ENCODE measurements at regions of chrX and their contacts with region 1.

Region 1: GRCh38 chrX:136931661-136932060 is 51.1 kb upstream of the RBMX start:
- DNase-seq: no peak
- ATAC-seq: no peak
- H3K4me3 Mint-ChIP-seq: no peak overlapping the region
- H3K27ac Mint-ChIP-seq: no peak overlapping the region
- H3K4me1 Mint-ChIP-seq: peaks cover 21% of the 10 kb centered on the region
- H3K27me3 Mint-ChIP-seq: no peaks in the 10 kb centered on the region

Region 2: DNA sequence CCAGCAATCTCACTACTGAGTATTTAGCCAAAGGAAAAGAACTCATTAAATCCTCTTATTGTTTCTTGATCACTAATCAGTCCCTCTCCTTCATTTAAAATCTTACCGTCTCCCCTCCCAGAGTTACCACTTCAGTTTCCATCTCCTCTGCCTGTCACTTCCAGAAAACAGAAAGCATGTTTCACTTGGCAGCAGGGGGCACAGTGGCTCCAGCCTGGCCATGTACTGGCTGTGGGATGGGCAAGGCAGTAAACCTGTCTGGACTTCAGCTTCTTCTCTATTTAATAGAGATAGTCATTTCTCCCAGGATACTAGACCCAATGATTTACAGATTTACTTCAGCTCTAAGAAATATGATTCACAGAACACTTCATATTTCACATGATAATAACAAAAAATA is 220.5 kb before region 1 on chrX:
- CTCF ChIA-PET with region 1: interaction called, 10 read pairs
- DNase-seq: no peak
- ATAC-seq: peak; percentile 60
- H3K4me3 Mint-ChIP-seq: no peak overlapping the region
- H3K27ac Mint-ChIP-seq: peak overlapping the region; percentile 66
- H3K4me1 Mint-ChIP-seq: peaks cover 50% of the 10 kb centered on the region
- H3K27me3 Mint-ChIP-seq: no peaks in the 10 kb centered on the region

Region 3: GRCh38 chrX:137051978-137052642 is 120.4 kb after region 1 on chrX:
- CTCF ChIA-PET with region 1: no interaction called
- DNase-seq: peak; percentile 84
- ATAC-seq: peak; percentile 94
- H3K4me3 Mint-ChIP-seq: peak overlapping the region; percentile 78
- H3K27ac Mint-ChIP-seq: peak overlapping the region; percentile 54
- H3K4me1 Mint-ChIP-seq: peaks cover 13% of the 10 kb centered on the region
- H3K27me3 Mint-ChIP-seq: peaks cover 42% of the 10 kb centered on the region